ENCODE measurements at regions of chr18 and their contacts with region 1.

Region 1: DNA sequence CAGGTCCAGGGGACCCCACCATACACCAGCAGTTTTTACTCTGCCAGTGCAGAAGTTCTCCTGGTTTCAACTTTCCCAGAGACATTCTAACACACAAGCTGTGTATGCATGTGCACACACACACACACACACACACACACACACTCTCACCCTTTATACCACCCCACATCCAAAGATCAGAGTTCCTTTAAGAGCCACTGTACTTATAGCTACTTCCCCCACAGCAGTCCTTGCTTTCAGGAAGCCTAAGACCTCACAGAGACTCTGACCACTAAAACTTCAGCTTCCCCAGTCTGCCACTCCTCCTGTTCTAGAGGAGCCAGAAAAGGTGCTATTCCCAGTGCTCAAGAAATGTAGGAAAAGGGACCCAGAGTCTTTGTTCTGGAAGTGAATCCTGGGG is 107.8 kb downstream of the ZNF521 start:
- DNase-seq: no peak
- ATAC-seq: no peak
- H3K4me3 Mint-ChIP-seq: no peak overlapping the region
- H3K27ac Mint-ChIP-seq: no peak overlapping the region
- H3K4me1 Mint-ChIP-seq: no peaks in the 10 kb centered on the region
- H3K27me3 Mint-ChIP-seq: no peaks in the 10 kb centered on the region
- CTCF ChIP-seq: no peak

Region 2: GRCh38 chr18:25233528-25234321 is 10.4 kb before region 1 on chr18:
- CTCF ChIA-PET with region 1: no interaction called
- POLR2A ChIA-PET with region 1: no interaction called
- intact Hi-C with region 1: loop called (anchors 1 kb)
- DNase-seq: no peak
- ATAC-seq: no peak
- H3K4me3 Mint-ChIP-seq: no peak overlapping the region
- H3K27ac Mint-ChIP-seq: no peak overlapping the region
- H3K4me1 Mint-ChIP-seq: no peaks in the 10 kb centered on the region
- H3K27me3 Mint-ChIP-seq: peaks cover 3% of the 10 kb centered on the region
- CTCF ChIP-seq: no peak